Lower leg skin (tissue), 4 donors: ENCODE measurements at regions of chr4 and their contacts with region 1.

Region 1: DNA sequence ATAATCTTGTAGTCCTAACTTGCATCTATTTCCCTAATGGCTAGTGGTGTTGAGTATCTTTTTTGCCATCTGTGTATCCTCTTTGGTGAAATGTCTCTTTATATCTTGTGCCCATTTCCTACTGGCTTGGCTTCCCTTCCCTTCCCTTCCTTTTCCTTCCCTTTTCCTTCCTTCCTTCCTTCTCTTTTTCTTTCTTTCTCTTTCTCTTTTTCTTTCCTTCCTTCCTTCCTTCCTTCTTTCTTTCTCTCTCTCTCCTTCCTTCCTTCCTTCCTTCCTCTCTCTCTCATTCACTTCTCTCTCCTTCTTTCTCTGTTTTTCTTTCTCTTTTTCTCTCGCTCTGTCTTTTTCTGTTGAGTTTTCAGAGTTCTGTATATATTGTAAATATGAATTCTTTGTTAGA is 61.5 kb upstream of the SLC4A4 start:
- DNase-seq: no peak
- H3K4me3 ChIP-seq: no peak overlapping the region
- CTCF ChIP-seq: no peak
- POLR2A ChIP-seq: no peak

Region 2: DNA sequence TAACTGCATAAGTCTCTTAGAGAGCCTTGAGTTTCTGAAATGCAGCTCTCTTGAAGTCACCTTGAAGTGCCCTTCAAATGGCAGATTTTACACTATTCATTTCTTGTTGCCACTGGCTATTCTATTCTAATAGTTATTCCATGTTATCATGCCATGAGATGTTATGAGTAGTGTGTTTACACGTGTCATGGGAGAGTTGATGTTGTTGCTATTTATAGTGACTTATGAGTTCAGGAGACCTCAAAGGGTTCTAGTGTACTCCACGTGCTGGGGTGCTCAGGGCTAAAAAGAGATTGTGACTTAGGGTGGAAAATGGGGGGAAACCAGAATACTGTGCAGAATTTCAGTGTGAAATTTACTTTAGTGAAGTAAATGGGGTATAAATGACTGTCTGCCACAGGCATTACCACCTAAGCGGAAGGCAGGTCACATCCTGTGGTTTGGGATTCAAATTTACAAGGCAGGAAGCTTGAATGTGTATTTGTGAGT is 15.7 kb before region 1 on chr4:
- intact Hi-C with region 1: loop called (anchors 1 kb)
- DNase-seq: no peak
- H3K4me3 ChIP-seq: no peak overlapping the region
- CTCF ChIP-seq: no peak
- POLR2A ChIP-seq: no peak

Region 3: DNA sequence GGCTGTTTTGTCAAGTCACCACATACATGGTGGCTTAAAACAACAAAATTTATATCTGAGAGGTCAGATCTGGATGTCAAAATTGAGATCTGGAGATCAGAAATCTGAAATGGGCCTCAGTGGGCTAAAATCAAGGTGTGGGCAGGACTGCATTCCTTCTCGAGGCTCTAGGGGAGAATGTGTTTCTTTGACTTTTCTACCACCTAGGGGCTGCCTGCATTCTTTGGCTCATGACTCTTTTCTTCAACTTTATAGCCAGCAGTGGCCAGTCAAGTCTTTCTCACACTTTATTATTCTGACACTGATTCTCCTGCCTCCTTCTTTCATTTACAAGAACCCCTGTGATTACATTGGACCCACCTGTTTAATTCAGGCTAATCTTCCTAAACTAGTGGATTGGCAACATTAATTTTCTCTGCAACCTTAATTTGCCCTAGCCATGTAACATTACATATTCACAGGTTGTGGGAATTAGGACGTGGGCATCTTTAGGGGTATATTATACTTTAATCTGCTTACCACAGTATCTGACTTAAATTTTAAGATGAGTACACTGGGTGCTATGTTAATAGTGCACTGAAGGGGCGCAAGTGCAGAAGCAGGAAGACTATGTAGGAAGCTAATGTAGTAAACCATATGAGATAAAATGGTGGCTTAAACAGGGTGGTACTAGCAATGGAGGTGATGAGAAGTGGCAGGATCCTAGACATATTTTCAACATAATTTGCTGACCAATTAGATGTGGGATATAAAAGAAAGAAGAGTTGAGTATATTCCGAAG is 249.5 kb after region 1 on chr4:
- intact Hi-C with region 1: no loop called
- DNase-seq: no peak
- H3K4me3 ChIP-seq: no peak overlapping the region
- CTCF ChIP-seq: no peak
- POLR2A ChIP-seq: no peak